Tibial artery (tissue), 4 donors: ENCODE measurements at regions of chr19 and their contacts with region 1.

Region 1: GRCh38 chr19:47305309-47305751 is 4.3 kb upstream of the C5AR1 start:
- DNase-seq: peak; percentile 71 to 90
- H3K4me3 ChIP-seq: no peak overlapping the region
- H3K27ac ChIP-seq: peak overlapping the region in 1 of 2 donors; percentile 16
- H3K4me1 ChIP-seq: peaks cover 0 to 38% (median 12%) of the 10 kb centered on the region in 4 donors
- H3K27me3 ChIP-seq: no peaks in the 10 kb centered on the region
- CTCF ChIP-seq: peak; percentile 81 to 92

Region 2: DNA sequence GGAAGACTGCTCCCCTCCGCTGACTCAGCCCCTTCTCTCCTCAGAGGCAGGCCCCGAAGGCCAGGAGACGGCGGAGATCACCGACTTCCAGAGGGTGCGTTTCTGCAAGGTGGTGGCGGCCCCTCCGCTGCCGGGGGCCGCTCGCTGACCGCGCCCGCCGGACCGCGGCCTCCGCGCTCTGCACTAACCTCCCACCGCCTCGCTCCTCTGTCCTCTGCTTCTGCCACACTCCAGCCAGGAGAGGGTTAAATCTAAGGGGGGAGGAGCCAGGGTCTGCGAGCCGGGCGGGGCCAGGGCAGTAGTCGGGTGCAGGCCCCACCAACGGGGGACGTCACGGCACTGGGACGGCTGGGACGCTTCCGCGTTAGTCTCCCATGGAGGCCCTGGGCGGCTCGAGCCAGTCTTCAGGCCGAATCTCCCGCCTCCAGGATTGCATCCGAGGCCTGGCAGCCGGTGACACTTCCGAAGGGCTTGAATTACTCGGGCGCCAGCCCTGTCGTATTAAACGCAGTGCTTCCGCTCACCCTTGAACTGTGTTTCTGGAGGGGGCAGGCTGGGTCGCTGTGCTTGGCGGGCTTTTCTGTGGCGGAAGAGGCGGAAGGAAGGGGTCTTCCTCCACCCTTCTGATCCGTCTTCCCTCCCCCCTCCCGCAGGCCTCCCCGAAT is 31.9 kb before region 1 on chr19:
- intact Hi-C with region 1: no loop called
- DNase-seq: peak; percentile 95 to 98
- H3K4me3 ChIP-seq: peak overlapping the region; percentile 76 to 98
- H3K27ac ChIP-seq: peak overlapping the region; percentile 99
- H3K4me1 ChIP-seq: peaks cover 0 to 46% (median 36%) of the 10 kb centered on the region in 4 donors
- H3K27me3 ChIP-seq: no peaks in the 10 kb centered on the region
- CTCF ChIP-seq: peak in 1 of 2 experiments; percentile 11

Region 3: GRCh38 chr19:47348819-47349795 is 43.8 kb after region 1 on chr19 and contains the start of gene DHX34:
- intact Hi-C with region 1: no loop called
- DNase-seq: peak; percentile 97 to 99
- H3K4me3 ChIP-seq: peak within 1 kb of the TSS; percentile 81 to 84
- H3K27ac ChIP-seq: peak within 1 kb of the TSS; percentile 72 to 80
- H3K4me1 ChIP-seq: peaks cover 0 to 27% (median 15%) of the 10 kb centered on the region in 4 donors
- H3K27me3 ChIP-seq: no peaks in the 10 kb centered on the region
- CTCF ChIP-seq: peak; percentile 98 to 99

Region 4: GRCh38 chr19:47507012-47507411 is 201.7 kb after region 1 on chr19:
- intact Hi-C with region 1: loop called (anchors 10 kb)
- DNase-seq: no peak
- H3K4me3 ChIP-seq: no peak overlapping the region
- H3K27ac ChIP-seq: peak overlapping the region in 1 of 2 donors; percentile 10
- H3K4me1 ChIP-seq: peaks cover 10 to 62% (median 56%) of the 10 kb centered on the region in 4 donors
- H3K27me3 ChIP-seq: no peaks in the 10 kb centered on the region
- CTCF ChIP-seq: no peak